ENCODE measurements at regions of chr3 and their contacts with region 1.

Region 1: GRCh38 chr3:187164885-187165543 is 25.7 kb upstream of the RPL39L start:
- DNase-seq: no peak
- ATAC-seq: peak; percentile 46

Region 2: DNA sequence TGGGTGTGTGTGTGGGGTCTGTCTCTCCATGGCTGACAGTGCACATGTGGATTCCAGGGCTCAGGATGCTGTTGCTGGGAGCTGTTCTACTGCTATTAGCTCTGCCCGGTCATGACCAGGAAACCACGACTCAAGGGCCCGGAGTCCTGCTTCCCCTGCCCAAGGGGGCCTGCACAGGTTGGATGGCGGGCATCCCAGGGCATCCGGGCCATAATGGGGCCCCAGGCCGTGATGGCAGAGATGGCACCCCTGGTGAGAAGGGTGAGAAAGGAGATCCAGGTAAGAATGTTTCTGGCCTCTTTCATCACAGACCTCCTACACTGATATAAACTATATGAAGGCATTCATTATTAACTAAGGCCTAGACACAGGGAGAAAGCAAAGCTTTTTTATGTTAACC is 312.0 kb before region 1 on chr3:
- intact Hi-C with region 1: loop called in 1 of 2 experiments (anchors 10 kb)
- DNase-seq: no peak
- ATAC-seq: no peak

Region 3: DNA sequence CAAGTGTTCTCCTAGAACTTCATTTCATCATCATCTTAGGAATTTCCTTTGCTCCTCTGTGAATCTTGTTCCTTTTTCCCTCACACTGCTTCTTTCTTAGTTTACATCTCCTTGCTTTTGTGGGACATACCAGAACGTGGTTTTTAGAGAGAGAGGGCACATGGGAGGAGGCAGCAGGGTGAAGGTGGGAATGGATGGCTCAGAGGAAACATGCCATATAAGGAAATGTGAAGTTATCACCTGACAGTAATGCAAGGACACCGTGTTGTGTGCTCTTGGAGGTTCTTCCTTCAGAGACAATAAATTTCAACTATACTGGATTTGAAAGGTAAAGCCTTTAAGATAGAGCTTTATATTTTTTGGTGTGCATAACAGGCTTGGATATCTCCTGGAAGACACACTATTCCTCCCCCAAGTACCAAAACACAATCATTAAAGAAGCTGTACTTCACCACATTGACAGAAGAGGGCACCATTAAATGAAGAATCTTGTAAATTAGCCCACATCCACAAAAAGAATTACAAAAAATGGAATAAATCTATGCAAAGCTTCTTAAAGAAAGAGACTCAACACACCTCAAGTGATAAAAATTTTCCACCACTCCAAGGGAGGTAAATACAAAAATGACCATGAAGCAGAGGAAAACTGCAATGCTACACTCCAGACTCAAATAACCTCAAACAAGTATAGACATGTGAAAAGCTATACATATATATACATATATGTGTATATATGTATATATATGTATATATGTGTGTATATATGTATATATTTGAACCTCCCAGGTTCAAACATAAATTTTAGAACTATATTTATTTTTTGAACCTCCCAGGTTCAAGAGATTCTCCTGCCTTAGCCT is 51.9 kb before region 1 on chr3:
- intact Hi-C with region 1: loop called in 1 of 2 experiments (anchors 5 kb)
- DNase-seq: no peak
- ATAC-seq: peak; percentile 30

Region 4: DNA sequence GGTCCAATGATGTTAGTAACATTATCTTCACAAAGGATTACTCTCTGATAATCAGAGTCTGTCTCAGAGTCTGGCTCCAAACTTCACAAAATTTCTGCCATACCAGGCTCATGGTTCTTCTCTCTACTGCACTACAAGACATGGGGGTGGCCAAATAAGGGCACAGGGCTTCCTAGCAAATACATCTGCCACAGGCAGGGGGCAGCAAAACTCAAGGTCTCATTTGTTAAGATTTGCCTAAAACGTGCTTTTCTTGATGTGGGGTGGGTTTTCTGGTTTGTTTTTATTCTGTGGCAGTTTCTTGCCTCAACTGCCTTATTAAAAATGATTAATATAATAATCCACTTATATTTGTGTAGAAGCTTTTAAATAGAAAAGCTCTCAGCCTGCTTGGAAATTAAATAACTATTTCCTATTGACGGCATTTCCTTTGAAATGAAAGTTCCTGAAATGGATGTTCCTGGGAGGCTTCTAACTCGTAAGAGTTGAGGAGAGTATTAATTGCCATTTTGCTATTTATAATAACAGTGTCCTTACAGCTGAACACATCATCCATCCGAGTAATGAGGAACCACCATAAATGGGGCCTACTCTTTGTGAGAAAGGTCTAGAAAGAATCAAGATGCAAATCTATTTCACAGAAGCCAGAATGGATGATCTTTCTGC is 451.4 kb after region 1 on chr3:
- intact Hi-C with region 1: no loop called
- DNase-seq: peak in 1 of 2 donors; percentile 43
- ATAC-seq: no peak

Measured in left colon (tissue), 2 donors.